MCF 10A (cell line): ENCODE measurements at regions of chr7 and their contacts with region 1.

Region 1: GRCh38 chr7:81298951-81299669 is 380.3 kb upstream of the SEMA3C start:
- DNase-seq: peak; percentile 94
- H3K4me3 Mint-ChIP-seq: peak overlapping the region; percentile 38
- H3K27ac Mint-ChIP-seq: peak overlapping the region; percentile 99
- H3K4me1 Mint-ChIP-seq: peaks cover 43% of the 10 kb centered on the region
- H3K27me3 Mint-ChIP-seq: no peaks in the 10 kb centered on the region
- CTCF ChIP-seq: no peak

Region 2: GRCh38 chr7:81013083-81013817 is 285.9 kb before region 1 on chr7:
- CTCF ChIA-PET with region 1: no interaction called
- POLR2A ChIA-PET with region 1: interaction called, 13 read pairs
- intact Hi-C with region 1: loop called (anchors 10 kb)
- DNase-seq: peak; percentile 88
- H3K4me3 Mint-ChIP-seq: peak overlapping the region; percentile 15
- H3K27ac Mint-ChIP-seq: peak overlapping the region; percentile 94
- H3K4me1 Mint-ChIP-seq: peaks cover 7% of the 10 kb centered on the region
- H3K27me3 Mint-ChIP-seq: no peaks in the 10 kb centered on the region
- CTCF ChIP-seq: no peak

Region 3: DNA sequence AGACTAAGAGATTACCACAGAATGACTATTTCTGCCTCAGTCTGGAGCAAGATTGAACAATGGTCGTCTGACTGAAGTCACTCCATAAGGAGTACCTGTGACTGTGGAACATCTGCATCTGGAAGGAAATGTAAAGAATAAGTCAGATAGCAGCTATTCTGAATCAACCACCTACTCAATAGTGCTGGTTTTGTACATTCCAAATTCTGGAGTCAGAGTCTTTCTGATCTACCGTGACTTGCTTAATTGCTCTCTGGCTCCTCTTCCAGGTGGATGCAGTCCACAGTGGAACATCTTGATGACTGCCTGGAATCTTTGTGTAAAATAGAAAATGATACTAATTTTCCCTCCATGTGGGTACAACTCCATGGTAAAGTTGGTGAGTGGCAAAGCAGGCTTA is 224.0 kb before region 1 on chr7:
- CTCF ChIA-PET with region 1: no interaction called
- POLR2A ChIA-PET with region 1: interaction called, 17 read pairs
- intact Hi-C with region 1: no loop called
- DNase-seq: peak; percentile 66
- H3K4me3 Mint-ChIP-seq: no peak overlapping the region
- H3K27ac Mint-ChIP-seq: peak overlapping the region; percentile 93
- H3K4me1 Mint-ChIP-seq: peaks cover 23% of the 10 kb centered on the region
- H3K27me3 Mint-ChIP-seq: no peaks in the 10 kb centered on the region
- CTCF ChIP-seq: no peak

Region 4: DNA sequence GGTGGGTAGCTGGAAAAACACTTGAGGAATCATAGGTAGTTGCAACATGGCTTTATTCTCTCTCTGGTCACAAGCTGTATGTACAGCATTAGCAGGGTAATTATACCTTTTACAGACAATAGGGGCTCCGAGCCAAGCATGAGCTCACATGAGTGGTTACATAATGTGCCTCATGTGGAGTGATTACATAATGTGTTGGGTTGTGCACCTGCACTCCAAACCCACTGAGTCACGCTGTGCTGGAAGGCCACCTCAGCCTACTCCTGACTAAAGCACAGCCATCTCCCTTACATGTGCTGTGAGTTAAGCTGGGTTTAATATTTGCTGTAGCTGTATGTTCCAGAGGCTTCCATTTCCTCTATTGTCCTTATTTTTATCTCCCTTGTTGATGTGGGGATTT is 31.6 kb before region 1 on chr7:
- CTCF ChIA-PET with region 1: no interaction called
- POLR2A ChIA-PET with region 1: interaction called, 14 read pairs
- intact Hi-C with region 1: no loop called
- DNase-seq: peak; percentile 96
- H3K4me3 Mint-ChIP-seq: no peak overlapping the region
- H3K27ac Mint-ChIP-seq: peak overlapping the region; percentile 55
- H3K4me1 Mint-ChIP-seq: peaks cover 5% of the 10 kb centered on the region
- H3K27me3 Mint-ChIP-seq: no peaks in the 10 kb centered on the region
- CTCF ChIP-seq: no peak

Region 5: DNA sequence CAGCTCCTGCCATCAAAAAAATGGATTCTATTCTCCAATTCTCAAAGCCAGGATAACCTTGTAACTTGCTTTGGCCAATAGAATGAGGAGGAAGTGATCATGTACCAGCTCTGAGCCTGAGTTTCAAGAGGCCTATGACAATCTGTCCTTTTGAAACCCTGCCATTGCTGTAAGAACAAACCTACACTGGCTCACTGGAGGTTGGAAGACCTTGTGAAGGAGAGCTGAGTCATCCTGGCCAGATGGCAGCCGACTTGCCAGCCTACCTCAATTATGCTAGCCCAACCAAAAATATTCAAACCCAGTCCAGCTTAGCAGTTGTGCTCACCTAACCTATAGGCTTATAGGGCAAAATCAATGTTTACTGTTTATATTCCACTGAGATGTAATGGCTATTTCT is 377.7 kb after region 1 on chr7:
- CTCF ChIA-PET with region 1: no interaction called
- POLR2A ChIA-PET with region 1: no interaction called
- intact Hi-C with region 1: no loop called
- DNase-seq: peak; percentile 57
- H3K4me3 Mint-ChIP-seq: no peak overlapping the region
- H3K27ac Mint-ChIP-seq: peak overlapping the region; percentile 42
- H3K4me1 Mint-ChIP-seq: peaks cover 8% of the 10 kb centered on the region
- H3K27me3 Mint-ChIP-seq: no peaks in the 10 kb centered on the region
- CTCF ChIP-seq: no peak